Activated CD8-positive, alpha-beta T cell treated with anti-CD3 and anti-CD28 coated beads for 36 hours (primary cell): ENCODE measurements at regions of chr4 and their contacts with region 1.

Region 1: GRCh38 chr4:59240011-59240410 is 1960.1 kb upstream of the ADGRL3 start:
- DNase-seq: no peak
- ATAC-seq: no peak
- H3K4me3 Mint-ChIP-seq: no peak overlapping the region
- H3K27ac Mint-ChIP-seq: no peak overlapping the region
- H3K4me1 Mint-ChIP-seq: no peaks in the 10 kb centered on the region
- H3K27me3 Mint-ChIP-seq: no peaks in the 10 kb centered on the region
- CTCF ChIP-seq: no peak

Region 2: GRCh38 chr4:59086410-59086809 is 153.6 kb before region 1 on chr4:
- CTCF ChIA-PET with region 1: no interaction called
- POLR2A ChIA-PET with region 1: no interaction called
- intact Hi-C with region 1: no loop called
- DNase-seq: no peak
- ATAC-seq: no peak
- H3K4me3 Mint-ChIP-seq: no peak overlapping the region
- H3K27ac Mint-ChIP-seq: no peak overlapping the region
- H3K4me1 Mint-ChIP-seq: no peaks in the 10 kb centered on the region
- H3K27me3 Mint-ChIP-seq: no peaks in the 10 kb centered on the region
- CTCF ChIP-seq: no peak

Region 3: GRCh38 chr4:59161249-59161648 is 78.8 kb before region 1 on chr4:
- CTCF ChIA-PET with region 1: no interaction called
- POLR2A ChIA-PET with region 1: no interaction called
- intact Hi-C with region 1: no loop called
- DNase-seq: no peak
- ATAC-seq: no peak
- H3K4me3 Mint-ChIP-seq: no peak overlapping the region
- H3K27ac Mint-ChIP-seq: no peak overlapping the region
- H3K4me1 Mint-ChIP-seq: no peaks in the 10 kb centered on the region
- H3K27me3 Mint-ChIP-seq: no peaks in the 10 kb centered on the region
- CTCF ChIP-seq: no peak

Region 4: DNA sequence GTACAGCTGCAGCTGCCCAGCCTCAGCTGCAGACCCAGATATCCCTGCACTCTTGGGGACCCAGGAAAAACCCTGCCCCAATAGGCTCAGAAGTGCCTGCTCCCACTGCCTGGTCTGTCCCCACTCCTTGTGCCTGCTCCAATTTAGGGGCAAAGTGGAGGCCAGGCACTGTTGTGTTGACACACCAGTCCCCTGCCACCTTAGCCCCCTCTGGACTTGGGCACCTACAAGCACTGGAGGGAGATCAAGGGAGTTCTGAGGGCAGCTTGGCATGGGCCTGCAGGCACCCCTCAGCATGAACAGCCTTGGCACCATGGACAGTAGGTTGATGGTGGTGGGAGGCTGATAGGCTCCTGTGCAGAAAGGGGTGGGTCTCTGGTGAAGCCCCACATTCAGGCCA is 60.6 kb before region 1 on chr4:
- CTCF ChIA-PET with region 1: no interaction called
- POLR2A ChIA-PET with region 1: no interaction called
- intact Hi-C with region 1: no loop called
- DNase-seq: no peak
- ATAC-seq: no peak
- H3K4me3 Mint-ChIP-seq: no peak overlapping the region
- H3K27ac Mint-ChIP-seq: no peak overlapping the region
- H3K4me1 Mint-ChIP-seq: no peaks in the 10 kb centered on the region
- H3K27me3 Mint-ChIP-seq: no peaks in the 10 kb centered on the region
- CTCF ChIP-seq: no peak

Region 5: GRCh38 chr4:59200992-59201391 is 39.0 kb before region 1 on chr4:
- CTCF ChIA-PET with region 1: no interaction called
- POLR2A ChIA-PET with region 1: no interaction called
- intact Hi-C with region 1: no loop called
- DNase-seq: no peak
- ATAC-seq: no peak
- H3K4me3 Mint-ChIP-seq: no peak overlapping the region
- H3K27ac Mint-ChIP-seq: no peak overlapping the region
- H3K4me1 Mint-ChIP-seq: no peaks in the 10 kb centered on the region
- H3K27me3 Mint-ChIP-seq: no peaks in the 10 kb centered on the region
- CTCF ChIP-seq: no peak

Region 6: DNA sequence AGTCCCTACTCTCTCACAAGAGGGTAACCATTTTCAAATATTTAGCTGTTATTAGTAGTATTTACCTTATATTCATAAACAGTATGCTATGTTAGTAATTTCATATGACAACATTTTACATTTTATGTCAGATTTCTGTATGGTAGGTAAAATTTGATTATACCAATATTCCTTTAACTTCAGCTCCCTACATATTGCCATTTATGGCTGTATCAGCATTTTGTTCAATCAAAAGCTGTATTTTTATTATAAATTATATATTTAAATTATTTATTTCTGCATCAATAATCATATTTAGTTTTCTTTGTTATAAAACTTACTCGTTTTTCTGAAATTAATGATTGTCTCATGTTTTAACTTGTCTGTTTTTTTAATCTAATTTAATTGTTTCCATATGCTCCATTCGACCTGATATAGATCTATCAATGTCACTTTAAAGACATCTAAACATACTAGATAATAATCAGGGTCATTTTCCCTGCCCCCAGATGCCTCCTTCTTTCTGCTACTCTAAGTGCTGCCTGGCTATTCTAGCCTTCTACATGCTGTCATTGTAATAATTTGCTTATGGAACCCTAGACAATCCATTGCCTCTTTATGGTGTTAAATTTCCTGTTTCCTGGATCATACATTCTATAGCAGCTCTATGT is 16.6 kb before region 1 on chr4:
- CTCF ChIA-PET with region 1: no interaction called
- POLR2A ChIA-PET with region 1: no interaction called
- intact Hi-C with region 1: loop called (anchors 1 kb)
- DNase-seq: no peak
- ATAC-seq: no peak
- H3K4me3 Mint-ChIP-seq: no peak overlapping the region
- H3K27ac Mint-ChIP-seq: no peak overlapping the region
- H3K4me1 Mint-ChIP-seq: no peaks in the 10 kb centered on the region
- H3K27me3 Mint-ChIP-seq: no peaks in the 10 kb centered on the region
- CTCF ChIP-seq: no peak